ENCODE measurements at regions of chr12 and their contacts with region 1.

Region 1: DNA sequence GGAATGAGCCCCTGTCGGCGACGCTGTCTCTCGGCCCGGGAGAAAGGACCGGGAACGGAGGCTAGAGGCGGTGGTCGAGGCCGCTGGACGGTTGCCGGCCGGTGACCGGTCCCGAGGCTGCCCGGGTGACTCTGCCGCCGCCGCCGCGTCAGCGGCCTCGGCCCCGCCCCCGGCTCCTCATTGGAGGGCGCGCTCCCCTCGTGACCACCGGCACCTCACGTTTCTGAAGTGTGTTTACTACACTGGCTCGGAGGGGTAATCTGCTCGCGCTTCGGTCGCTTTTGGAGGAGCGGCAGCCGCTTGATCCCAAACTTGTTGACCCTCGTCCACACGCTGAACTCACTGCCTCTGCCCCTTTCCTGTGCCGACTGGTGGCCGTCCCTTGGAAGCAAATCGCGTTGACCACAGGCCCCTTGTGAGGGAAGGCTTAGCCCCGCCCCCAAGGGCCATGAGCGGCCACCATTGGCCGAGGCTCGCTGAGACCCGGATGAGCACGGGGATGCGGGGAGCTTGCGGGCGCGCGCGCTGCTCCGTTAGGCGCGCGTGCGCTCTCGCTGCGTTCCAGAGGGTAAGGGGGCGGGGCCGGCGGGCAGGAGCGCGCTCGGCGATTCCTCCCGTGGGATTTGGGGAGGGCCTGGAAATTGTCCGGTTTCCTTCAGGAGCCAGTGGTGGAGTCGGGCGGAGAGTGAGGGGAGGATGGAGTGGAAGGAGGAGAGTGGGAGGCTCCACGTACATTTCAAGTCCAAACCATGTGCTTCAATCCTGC is at the start of gene CRY1:
- DNase-seq: peak; percentile 87 to 98 (median 94)
- ATAC-seq: peak; percentile 90
- H3K4me3 ChIP-seq: peak within 1 kb of the TSS; percentile 85
- H3K4me3 Mint-ChIP-seq: no peak within 1 kb of the TSS
- H3K27ac ChIP-seq: peak within 1 kb of the TSS; percentile 99
- H3K27ac Mint-ChIP-seq: no peak within 1 kb of the TSS
- H3K4me1 ChIP-seq: peaks cover 16 to 18% of the 10 kb centered on the region in 2 donors
- H3K4me1 Mint-ChIP-seq: peaks cover 5 to 18% (median 11%) of the 10 kb centered on the region in 7 donors
- H3K27me3 ChIP-seq: no peaks in the 10 kb centered on the region
- H3K27me3 Mint-ChIP-seq: peaks cover 0 to 11% (median 5%) of the 10 kb centered on the region in 5 donors
- total RNA-seq, gene CRY1: 8.0 to 58.4 (median 33.4) TPM

Region 2: GRCh38 chr12:106302401-106303201 is 791.0 kb before region 1 on chr12 and contains the start of gene TCP11L2:
- CTCF ChIA-PET with region 1: no interaction called
- POLR2A ChIA-PET with region 1: interaction called, 5 read pairs
- intact Hi-C with region 1: loop called in 1 of 2 experiments (anchors 1 kb)
- DNase-seq: peak; percentile 91 to 96 (median 94)
- ATAC-seq: peak; percentile 79
- H3K4me3 ChIP-seq: peak within 1 kb of the TSS; percentile 94
- H3K4me3 Mint-ChIP-seq: peak within 1 kb of the TSS; percentile 88 to 99 (median 96)
- H3K27ac ChIP-seq: peak within 1 kb of the TSS; percentile 100
- H3K27ac Mint-ChIP-seq: peak within 1 kb of the TSS; percentile 97 to 100 (median 100)
- H3K4me1 ChIP-seq: peaks cover 15 to 49% of the 10 kb centered on the region in 2 donors
- H3K4me1 Mint-ChIP-seq: peaks cover 45 to 75% (median 55%) of the 10 kb centered on the region in 7 donors
- H3K27me3 ChIP-seq: no peaks in the 10 kb centered on the region
- H3K27me3 Mint-ChIP-seq: peaks cover 0 to 2% (median 0%) of the 10 kb centered on the region in 5 donors
- total RNA-seq, gene TCP11L2: 26.9 to 258 (median 134) TPM

Region 3: DNA sequence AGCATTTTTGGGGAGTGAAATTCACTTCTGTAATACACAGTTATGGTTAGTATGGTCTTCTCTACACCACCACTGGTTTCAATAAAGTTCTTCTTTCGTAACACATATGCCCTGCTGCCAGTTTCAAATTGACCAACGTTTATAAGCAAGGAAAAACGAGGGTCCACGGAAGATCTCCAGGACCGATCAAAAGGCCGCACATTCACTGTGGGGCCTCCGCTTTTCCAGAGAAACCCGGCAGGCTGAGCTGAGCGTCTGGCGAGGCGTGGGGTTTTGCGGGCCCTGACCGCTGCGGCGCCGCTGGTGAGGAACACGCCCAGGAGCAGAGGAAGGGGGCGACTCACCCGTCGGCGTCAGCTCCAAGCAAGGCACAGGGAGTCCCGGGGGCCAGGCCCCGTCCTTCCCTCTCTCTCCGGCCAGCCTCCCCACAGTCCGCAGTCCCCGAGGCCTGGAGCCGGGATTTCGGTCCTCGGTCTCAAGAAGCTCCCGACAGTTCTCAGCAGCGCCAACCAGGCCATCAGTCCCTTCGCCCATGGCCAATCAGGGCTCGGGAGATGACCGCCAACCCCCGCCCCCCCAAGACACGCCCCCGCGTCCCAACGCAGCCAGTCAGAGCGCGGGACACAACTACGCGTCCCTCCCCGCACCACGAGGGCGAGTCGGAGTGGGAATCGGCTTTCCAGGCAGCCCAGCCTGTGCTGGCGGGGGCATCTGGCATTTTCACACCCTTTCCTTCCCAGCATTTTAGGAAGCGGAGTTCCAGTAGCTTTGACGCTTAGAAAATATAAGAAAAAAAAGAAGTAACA is 106.8 kb before region 1 on chr12 and contains the start of gene MTERF2:
- CTCF ChIA-PET with region 1: interaction called, 3 read pairs
- POLR2A ChIA-PET with region 1: no interaction called
- intact Hi-C with region 1: loop called (anchors 1 kb)
- DNase-seq: peak; percentile 52 to 78 (median 67)
- ATAC-seq: peak; percentile 99
- H3K4me3 ChIP-seq: peak within 1 kb of the TSS; percentile 88
- H3K4me3 Mint-ChIP-seq: peak within 1 kb of the TSS; percentile 91 to 97 (median 96)
- H3K27ac ChIP-seq: peak within 1 kb of the TSS; percentile 77
- H3K27ac Mint-ChIP-seq: peak within 1 kb of the TSS; percentile 79 to 92 (median 85)
- H3K4me1 ChIP-seq: peaks cover 12 to 14% of the 10 kb centered on the region in 2 donors
- H3K4me1 Mint-ChIP-seq: peaks cover 29 to 45% (median 41%) of the 10 kb centered on the region in 7 donors
- H3K27me3 ChIP-seq: no peaks in the 10 kb centered on the region
- H3K27me3 Mint-ChIP-seq: peaks cover 0 to 2% (median 0%) of the 10 kb centered on the region in 5 donors
- total RNA-seq, gene MTERF2: 7.1 to 12.9 (median 9.7) TPM

Region 4: DNA sequence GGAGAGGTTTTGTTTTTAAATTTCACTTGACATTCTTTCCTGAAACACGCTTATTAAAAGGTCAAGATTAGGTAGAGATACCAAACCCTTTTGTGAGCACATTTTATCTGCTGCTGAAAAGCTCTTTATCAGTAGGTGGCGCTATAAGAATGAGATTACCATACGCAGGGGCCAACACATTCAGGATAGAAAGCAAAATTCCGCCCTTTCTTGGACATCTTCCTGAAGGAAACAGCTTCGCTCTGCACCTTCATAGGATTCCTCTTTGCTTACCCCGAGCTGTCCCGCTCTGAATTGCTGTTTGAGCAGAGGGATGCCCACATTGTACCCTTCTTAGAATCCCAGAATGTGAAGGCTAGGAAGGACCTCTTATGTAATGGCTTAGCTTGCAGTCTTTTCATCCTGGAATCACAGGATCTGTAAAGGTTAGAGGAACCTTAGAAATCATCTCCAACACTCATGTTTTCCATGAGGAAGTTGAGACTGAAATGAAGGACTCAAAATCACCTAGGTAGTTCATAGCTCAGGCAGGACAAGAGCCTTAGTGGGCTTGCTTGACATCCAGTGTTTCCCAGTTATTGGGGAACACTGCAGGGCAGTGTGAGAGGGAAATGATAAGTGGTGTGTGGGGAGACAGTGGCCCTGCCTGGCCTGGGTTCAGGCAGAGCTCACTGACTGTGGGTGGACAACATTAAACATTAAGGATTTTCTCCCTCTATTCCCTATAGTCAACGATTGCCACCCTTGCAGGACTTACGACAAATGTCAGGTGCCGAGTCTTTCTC is 38.4 kb after region 1 on chr12:
- CTCF ChIA-PET with region 1: interaction called, 4 read pairs
- POLR2A ChIA-PET with region 1: no interaction called
- intact Hi-C with region 1: loop called in 1 of 2 experiments (anchors 1 kb)
- DNase-seq: peak in 6 of 9 donors; percentile 5 to 56 (median 42)
- ATAC-seq: peak; percentile 59
- H3K4me3 ChIP-seq: no peak overlapping the region
- H3K4me3 Mint-ChIP-seq: no peak overlapping the region
- H3K27ac ChIP-seq: no peak overlapping the region
- H3K27ac Mint-ChIP-seq: peak overlapping the region in 2 of 9 donors; percentile 12 to 46
- H3K4me1 ChIP-seq: no peaks in the 10 kb centered on the region
- H3K4me1 Mint-ChIP-seq: peaks cover 0 to 5% (median 0%) of the 10 kb centered on the region in 7 donors
- H3K27me3 ChIP-seq: no peaks in the 10 kb centered on the region
- H3K27me3 Mint-ChIP-seq: peaks cover 0 to 1% (median 0%) of the 10 kb centered on the region in 5 donors

Region 5: GRCh38 chr12:107607464-107608392 is 514.1 kb after region 1 on chr12:
- CTCF ChIA-PET with region 1: no interaction called
- POLR2A ChIA-PET with region 1: no interaction called
- intact Hi-C with region 1: loop called (anchors 1 kb)
- DNase-seq: peak; percentile 55 to 82 (median 71)
- ATAC-seq: peak; percentile 78
- H3K4me3 ChIP-seq: no peak overlapping the region
- H3K4me3 Mint-ChIP-seq: no peak overlapping the region
- H3K27ac ChIP-seq: no peak overlapping the region
- H3K27ac Mint-ChIP-seq: peak overlapping the region in 2 of 9 donors; percentile 9 to 25
- H3K4me1 ChIP-seq: no peaks in the 10 kb centered on the region
- H3K4me1 Mint-ChIP-seq: no peaks in the 10 kb centered on the region
- H3K27me3 ChIP-seq: no peaks in the 10 kb centered on the region
- H3K27me3 Mint-ChIP-seq: no peaks in the 10 kb centered on the region

Region 6: GRCh38 chr12:108633534-108634248 is 1540.1 kb after region 1 on chr12 and contains the start of gene SELPLG:
- CTCF ChIA-PET with region 1: no interaction called
- POLR2A ChIA-PET with region 1: no interaction called
- intact Hi-C with region 1: loop called in 1 of 2 experiments (anchors 10 kb)
- DNase-seq: peak; percentile 70 to 96 (median 93)
- ATAC-seq: peak; percentile 83
- H3K4me3 ChIP-seq: peak within 1 kb of the TSS; percentile 98
- H3K4me3 Mint-ChIP-seq: peak within 1 kb of the TSS; percentile 90 to 100 (median 99)
- H3K27ac ChIP-seq: peak within 1 kb of the TSS; percentile 89
- H3K27ac Mint-ChIP-seq: peak within 1 kb of the TSS; percentile 95 to 100 (median 98)
- H3K4me1 ChIP-seq: peaks cover 50 to 53% of the 10 kb centered on the region in 2 donors
- H3K4me1 Mint-ChIP-seq: peaks cover 50 to 73% (median 66%) of the 10 kb centered on the region in 7 donors
- H3K27me3 ChIP-seq: no peaks in the 10 kb centered on the region
- H3K27me3 Mint-ChIP-seq: no peaks in the 10 kb centered on the region
- total RNA-seq, gene SELPLG: 54.3 to 217 (median 154) TPM

Measured in naive thymus-derived CD4-positive, alpha-beta T cell (primary cell).